Activated CD4-positive, alpha-beta T cell treated with anti-CD3 and anti-CD28 coated beads, Interleukin-2, amount 10 ng/mL, durations not matched to agents 24 days and 14 days (primary cell): ENCODE measurements at regions of chr11 and their contacts with region 1.

Region 1: DNA sequence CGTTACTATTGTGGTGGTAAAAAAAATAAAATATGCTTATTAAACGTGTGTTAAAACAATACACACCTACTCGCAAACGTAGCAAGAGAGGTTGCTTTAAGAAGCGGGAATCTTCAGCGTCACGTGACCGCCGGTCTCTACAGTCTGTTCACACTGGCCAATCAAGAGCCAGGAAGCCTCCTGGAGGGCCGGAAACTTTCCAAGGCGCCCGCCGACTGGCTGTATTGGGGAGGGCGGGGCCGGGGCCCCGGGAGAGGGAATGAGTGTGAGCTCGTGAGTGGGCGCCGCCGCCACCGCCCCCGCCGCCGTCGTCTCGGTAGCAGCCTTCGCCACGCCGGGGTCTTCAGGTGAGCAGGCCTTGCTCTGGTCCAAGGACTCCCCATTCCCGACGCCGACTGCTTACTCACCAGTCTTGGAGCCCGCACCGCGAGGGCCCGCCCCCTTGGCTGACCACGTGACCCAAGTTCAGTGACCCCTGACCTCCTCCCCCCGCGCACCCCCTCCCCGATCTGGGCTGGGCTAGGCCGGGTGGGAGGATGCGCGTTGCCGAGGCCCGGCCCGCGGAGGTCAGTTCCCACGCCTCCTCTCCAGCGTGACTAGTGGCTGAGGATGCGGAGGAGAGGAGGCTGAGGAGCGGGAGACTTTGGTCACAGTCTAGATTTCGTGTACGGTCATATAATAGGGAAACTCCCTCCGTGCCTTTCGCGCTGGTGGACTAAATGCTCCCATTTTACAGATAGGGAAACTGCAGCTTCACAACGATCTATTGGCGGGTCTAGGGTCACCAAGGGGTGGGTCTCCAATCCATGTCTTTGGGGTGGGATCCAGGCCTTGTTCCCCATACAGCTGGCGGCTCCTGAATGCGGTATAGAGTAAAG is at the start of gene TAF6L:
- DNase-seq: peak; percentile 98
- H3K4me3 Mint-ChIP-seq: peak within 1 kb of the TSS; percentile 93
- H3K27ac Mint-ChIP-seq: peak within 1 kb of the TSS; percentile 96
- H3K4me1 Mint-ChIP-seq: peaks cover 26% of the 10 kb centered on the region
- H3K27me3 Mint-ChIP-seq: no peaks in the 10 kb centered on the region
- total RNA-seq, gene TAF6L: 20.1 and 20.2 TPM in 2 replicates

Region 2: GRCh38 chr11:62705880-62706849 is 65.2 kb before region 1 on chr11:
- intact Hi-C with region 1: loop called (anchors 5 kb)
- DNase-seq: peak; percentile 97
- H3K4me3 Mint-ChIP-seq: peak overlapping the region; percentile 96
- H3K27ac Mint-ChIP-seq: peak overlapping the region; percentile 89
- H3K4me1 Mint-ChIP-seq: peaks cover 33% of the 10 kb centered on the region
- H3K27me3 Mint-ChIP-seq: no peaks in the 10 kb centered on the region

Region 3: DNA sequence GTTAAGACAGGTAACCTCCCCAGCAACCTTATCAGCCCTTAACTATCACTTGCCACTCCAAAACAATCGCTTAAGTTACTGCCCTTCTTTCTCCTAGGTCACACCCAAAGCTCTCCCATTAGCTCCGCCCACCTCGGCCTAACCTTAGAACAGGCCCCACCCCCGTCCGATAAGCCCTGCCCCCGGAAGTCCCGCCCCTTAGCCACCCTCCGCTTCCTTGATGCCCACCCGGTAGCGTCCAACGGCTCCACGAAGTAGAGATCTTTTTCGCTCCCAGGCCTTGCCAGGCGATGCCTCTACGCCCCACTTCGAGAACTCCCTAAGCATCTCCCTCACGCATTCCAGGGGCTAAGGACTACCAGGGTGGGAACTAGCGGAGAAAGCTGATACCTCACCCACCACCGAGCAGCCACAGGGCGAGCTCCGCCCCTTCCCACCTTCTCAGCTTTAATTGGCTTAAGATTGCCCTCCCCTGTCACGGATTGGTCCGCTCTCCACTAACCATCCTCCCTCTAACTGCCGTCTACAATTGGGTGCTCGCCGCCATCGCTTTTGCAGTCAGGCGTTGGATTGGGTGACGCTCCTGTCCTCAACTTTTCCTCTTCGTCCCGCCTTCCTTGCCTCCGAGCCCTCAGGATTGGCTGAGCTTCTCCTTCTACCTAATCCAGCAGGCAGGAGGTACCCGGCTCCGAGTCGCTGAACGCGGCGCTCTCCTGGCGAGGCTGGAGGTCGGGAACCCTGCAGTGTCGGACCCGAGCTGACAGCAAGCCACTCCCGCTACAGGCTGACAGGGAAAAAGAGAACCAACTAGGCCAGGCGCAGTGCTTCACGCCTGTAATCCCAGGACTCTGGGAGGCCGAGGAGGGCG is 17.4 kb before region 1 on chr11 and contains the start of gene ZBTB3:
- intact Hi-C with region 1: loop called (anchors 1 kb)
- DNase-seq: peak; percentile 98
- H3K4me3 Mint-ChIP-seq: peak within 1 kb of the TSS; percentile 98
- H3K27ac Mint-ChIP-seq: peak within 1 kb of the TSS; percentile 97
- H3K4me1 Mint-ChIP-seq: peaks cover 16% of the 10 kb centered on the region
- H3K27me3 Mint-ChIP-seq: no peaks in the 10 kb centered on the region
- total RNA-seq, gene ZBTB3: 7.5 and 11.1 TPM in 2 replicates

Region 4: GRCh38 chr11:62805076-62805892 is 33.9 kb after region 1 on chr11 and contains the start of gene NXF1:
- intact Hi-C with region 1: loop called (anchors 1 kb)
- DNase-seq: peak; percentile 99
- H3K4me3 Mint-ChIP-seq: peak within 1 kb of the TSS; percentile 100
- H3K27ac Mint-ChIP-seq: peak within 1 kb of the TSS; percentile 95
- H3K4me1 Mint-ChIP-seq: peaks cover 30% of the 10 kb centered on the region
- H3K27me3 Mint-ChIP-seq: no peaks in the 10 kb centered on the region
- total RNA-seq, gene NXF1: 133 and 147 TPM in 2 replicates

Region 5: DNA sequence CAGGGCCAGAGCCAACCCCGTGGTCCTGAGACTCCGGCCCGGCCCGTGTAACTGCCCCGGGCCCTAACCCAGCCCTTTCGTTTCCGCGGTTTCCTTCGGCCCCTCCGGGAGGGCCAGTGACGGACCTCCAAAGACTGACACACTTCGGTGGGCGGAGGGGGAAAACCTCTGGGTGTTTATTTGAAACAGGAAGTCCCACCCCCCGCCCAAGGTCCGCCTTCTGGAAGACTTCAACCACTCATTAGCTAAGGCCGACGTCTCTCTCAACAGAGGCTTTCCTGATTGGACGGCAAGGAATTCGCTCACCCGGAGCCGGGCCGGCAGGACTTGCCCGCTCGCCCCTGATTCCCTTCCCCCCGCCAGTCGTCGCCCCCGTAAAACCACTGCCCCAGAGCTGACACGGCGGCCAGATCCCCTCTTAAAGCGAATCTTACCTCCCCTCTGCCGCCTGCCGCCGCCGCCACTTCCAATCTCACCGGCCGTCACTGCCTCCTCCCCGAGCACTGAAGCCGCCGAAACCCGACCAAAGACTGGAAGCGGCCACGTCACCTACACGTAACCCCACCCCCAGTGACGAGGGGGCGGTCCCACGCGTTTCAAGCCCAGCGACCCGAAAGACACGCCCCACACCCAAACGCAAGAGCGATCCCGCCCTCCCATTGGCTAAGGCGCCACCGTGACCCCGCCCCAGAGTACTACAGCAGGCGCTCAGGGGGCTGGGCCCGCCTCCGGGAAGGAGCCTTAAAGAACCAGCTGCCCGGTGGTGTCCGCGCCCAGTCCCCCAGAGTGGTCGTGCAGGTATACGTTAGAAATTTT is 60.3 kb after region 1 on chr11 and contains the start of gene STX5:
- intact Hi-C with region 1: loop called (anchors 1 kb)
- DNase-seq: peak; percentile 100
- H3K4me3 Mint-ChIP-seq: peak within 1 kb of the TSS; percentile 89
- H3K27ac Mint-ChIP-seq: peak within 1 kb of the TSS; percentile 97
- H3K4me1 Mint-ChIP-seq: peaks cover 38% of the 10 kb centered on the region
- H3K27me3 Mint-ChIP-seq: no peaks in the 10 kb centered on the region
- total RNA-seq, gene STX5: 28.1 and 33.5 TPM in 2 replicates

Region 6: DNA sequence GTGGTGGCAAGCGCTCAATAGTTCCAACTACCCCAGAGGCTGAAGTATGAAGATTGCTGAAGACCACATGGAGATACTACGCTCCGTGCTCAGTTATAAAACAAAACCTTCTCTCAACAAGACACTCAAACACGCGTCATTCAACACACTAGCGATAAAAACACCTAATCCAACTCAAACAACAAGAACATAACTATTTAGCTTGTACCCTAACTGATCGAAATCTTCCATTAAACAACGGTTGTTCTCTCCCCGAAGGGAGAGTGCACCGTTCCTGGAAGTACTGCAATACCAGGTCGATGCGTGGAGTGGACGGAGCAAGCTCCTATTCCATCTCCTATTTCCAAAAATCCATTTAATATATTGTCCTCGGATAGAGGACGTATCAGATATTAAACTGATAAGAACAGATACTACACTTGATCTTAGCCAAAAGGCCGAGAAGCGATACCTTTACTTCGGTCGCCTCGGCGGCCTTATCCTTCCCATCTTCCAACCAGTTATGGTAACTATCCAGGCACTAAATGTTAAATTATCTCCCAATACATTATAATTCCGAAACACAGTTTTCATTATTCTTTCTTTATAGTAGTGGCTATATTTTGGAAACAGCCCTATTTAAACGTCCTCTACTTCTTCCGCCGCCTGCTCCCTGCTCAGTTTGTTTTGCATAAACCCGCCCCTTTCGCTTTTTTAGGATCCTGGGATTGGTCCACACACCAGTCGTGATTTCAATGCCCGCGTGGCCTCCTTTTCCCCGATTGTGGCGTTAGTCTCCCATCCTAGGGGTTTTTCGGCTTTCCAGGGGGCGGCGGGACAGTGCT is 70.2 kb after region 1 on chr11:
- intact Hi-C with region 1: loop called (anchors 1 kb)
- DNase-seq: peak; percentile 95
- H3K4me3 Mint-ChIP-seq: no peak overlapping the region
- H3K27ac Mint-ChIP-seq: no peak overlapping the region
- H3K4me1 Mint-ChIP-seq: peaks cover 26% of the 10 kb centered on the region
- H3K27me3 Mint-ChIP-seq: no peaks in the 10 kb centered on the region

Region 7: GRCh38 chr11:63671322-63672155 is 900.2 kb after region 1 on chr11 and contains the start of gene ATL3:
- intact Hi-C with region 1: no loop called
- DNase-seq: peak; percentile 98
- H3K4me3 Mint-ChIP-seq: peak within 1 kb of the TSS; percentile 82
- H3K27ac Mint-ChIP-seq: peak within 1 kb of the TSS; percentile 88
- H3K4me1 Mint-ChIP-seq: peaks cover 27% of the 10 kb centered on the region
- H3K27me3 Mint-ChIP-seq: no peaks in the 10 kb centered on the region
- total RNA-seq, gene ATL3: 38.5 and 39.5 TPM in 2 replicates